GM12878 (cell line): ENCODE measurements at regions of chrX and their contacts with region 1.

Region 1: DNA sequence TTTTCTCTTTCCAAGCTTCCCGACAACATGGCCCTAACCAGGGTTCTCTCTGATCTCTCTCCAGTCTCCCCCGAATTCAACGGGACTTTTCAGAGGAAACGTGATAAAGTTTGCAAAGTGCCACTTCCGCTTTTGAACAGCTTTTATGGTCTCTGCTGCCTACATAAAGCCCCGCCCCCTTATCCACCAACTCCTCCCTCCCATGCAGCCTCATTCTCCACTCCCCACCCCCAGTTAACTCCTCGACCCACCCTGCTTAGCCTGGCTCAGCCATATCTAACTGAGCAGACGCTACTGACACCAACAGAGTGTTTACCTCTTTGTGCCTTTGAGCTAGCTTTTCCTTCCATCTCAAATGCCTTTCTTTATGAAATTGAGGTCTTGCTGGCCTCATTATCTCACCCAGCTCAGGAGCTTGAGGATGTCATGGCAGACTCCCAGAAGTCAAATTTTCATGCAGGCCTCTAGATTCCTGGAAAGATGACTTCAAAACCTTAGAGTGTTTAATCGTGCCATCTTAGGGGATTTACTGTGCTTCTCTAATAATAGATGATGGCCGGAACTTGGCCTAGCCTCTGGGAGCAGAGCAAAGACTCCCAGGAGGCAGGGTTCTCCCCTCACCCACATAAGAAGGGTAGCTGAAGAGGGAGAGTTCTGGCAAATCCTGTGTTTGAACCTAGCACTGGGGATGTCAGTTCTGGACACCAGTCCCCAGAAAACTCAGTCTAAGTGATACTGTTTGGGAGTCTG is 606.0 kb downstream of the BCOR start:
- DNase-seq: peak; percentile 58
- ATAC-seq: peak; percentile 86
- H3K4me3 ChIP-seq: no peak overlapping the region
- H3K27ac ChIP-seq: peak overlapping the region; percentile 59
- H3K4me1 ChIP-seq: peaks cover 36% of the 10 kb centered on the region
- H3K27me3 ChIP-seq: no peaks in the 10 kb centered on the region
- CTCF ChIP-seq: no peak
- EP300 ChIP-seq: no peak
- POLR2A ChIP-seq: no peak
- RAD21 ChIP-seq: no peak

Region 2: GRCh38 chrX:39439906-39440798 is 51.6 kb before region 1 on chrX:
- CTCF ChIA-PET with region 1: interaction called, 3 read pairs
- POLR2A ChIA-PET with region 1: interaction called, 5 read pairs
- RAD21 ChIA-PET with region 1: interaction called, 20 read pairs
- SMC1A ChIA-PET with region 1: interaction called, 3 read pairs
- in situ Hi-C with region 1: no loop called
- intact Hi-C with region 1: no loop called
- DNase-seq: peak; percentile 36
- ATAC-seq: peak; percentile 88
- H3K4me3 ChIP-seq: no peak overlapping the region
- H3K27ac ChIP-seq: peak overlapping the region; percentile 56
- H3K4me1 ChIP-seq: peaks cover 16% of the 10 kb centered on the region
- H3K27me3 ChIP-seq: no peaks in the 10 kb centered on the region
- CTCF ChIP-seq: no peak
- EP300 ChIP-seq: no peak
- POLR2A ChIP-seq: no peak
- RAD21 ChIP-seq: no peak

Region 3: GRCh38 chrX:39502486-39502885 is 10.8 kb after region 1 on chrX:
- CTCF ChIA-PET with region 1: no interaction called
- POLR2A ChIA-PET with region 1: interaction called, 3 read pairs
- RAD21 ChIA-PET with region 1: no interaction called
- SMC1A ChIA-PET with region 1: interaction called, 11 read pairs
- in situ Hi-C with region 1: no loop called
- intact Hi-C with region 1: no loop called
- DNase-seq: no peak
- ATAC-seq: no peak
- H3K4me3 ChIP-seq: no peak overlapping the region
- H3K27ac ChIP-seq: no peak overlapping the region
- H3K4me1 ChIP-seq: no peaks in the 10 kb centered on the region
- H3K27me3 ChIP-seq: no peaks in the 10 kb centered on the region
- CTCF ChIP-seq: no peak
- EP300 ChIP-seq: no peak
- POLR2A ChIP-seq: no peak
- RAD21 ChIP-seq: no peak

Region 4: GRCh38 chrX:39613997-39614679 is 122.4 kb after region 1 on chrX:
- CTCF ChIA-PET with region 1: no interaction called
- POLR2A ChIA-PET with region 1: no interaction called
- RAD21 ChIA-PET with region 1: no interaction called
- SMC1A ChIA-PET with region 1: interaction called, 3 read pairs
- in situ Hi-C with region 1: no loop called
- intact Hi-C with region 1: loop called (anchors 2 kb)
- DNase-seq: peak; percentile 46
- ATAC-seq: peak; percentile 79
- H3K4me3 ChIP-seq: peak overlapping the region; percentile 55
- H3K27ac ChIP-seq: peak overlapping the region; percentile 46; the same call in 1 of the 2 replicates
- H3K4me1 ChIP-seq: peaks cover 9% of the 10 kb centered on the region
- H3K27me3 ChIP-seq: no peaks in the 10 kb centered on the region; a peak in 1 of 4 replicates
- CTCF ChIP-seq: no peak
- EP300 ChIP-seq: 0 out of 4 replicates have a peak, but pooled peaks of 1 of the 2 experiments have one; percentile 25
- POLR2A ChIP-seq: no peak
- RAD21 ChIP-seq: no peak